HepG2 (cell line): ENCODE measurements at regions of chr9 and their contacts with region 1.

Region 1: DNA sequence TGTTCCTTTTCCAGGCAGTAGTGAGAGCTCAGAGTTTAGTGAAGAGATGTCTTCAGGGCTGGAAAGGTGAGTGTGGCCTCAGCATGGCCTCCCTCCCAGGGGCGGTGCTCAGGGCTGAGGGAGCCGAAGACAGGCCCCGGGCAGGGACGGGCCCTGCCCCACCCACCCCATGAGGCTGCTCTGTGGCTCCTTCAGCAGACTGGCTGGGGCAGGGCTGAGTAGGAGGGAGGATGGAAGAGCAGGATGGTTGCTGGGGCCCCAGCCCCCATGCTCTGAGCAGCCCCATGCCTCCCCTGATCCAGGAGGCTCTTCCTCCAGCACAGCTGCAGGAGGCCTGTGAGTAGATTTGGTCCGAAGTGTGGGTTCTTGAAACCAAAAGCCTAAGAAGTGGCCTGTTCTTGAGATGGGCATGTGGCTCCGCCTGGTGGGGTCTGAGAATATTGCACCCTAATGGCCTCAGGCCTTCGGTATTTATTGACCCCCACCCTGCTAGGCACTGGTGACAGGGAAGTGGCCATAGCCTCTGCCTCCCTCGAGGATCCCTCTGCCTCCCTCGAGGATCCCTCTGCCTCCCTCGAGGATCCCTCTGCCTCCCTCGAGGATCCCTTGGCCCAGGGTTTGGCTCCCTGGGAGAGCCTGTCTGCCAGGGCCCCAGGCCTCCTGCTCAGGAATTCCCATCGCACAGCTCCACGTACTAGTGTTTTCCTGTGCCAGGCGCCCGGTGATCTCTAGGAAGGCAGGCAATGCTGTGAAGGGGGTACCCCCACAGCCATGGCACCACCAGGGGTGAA is 65.4 kb upstream of the GARNL3 start:
- DNase-seq: peak; percentile 45
- ATAC-seq: peak; percentile 34
- H3K4me3 ChIP-seq: peak overlapping the region in 1 of 3 experiments; percentile 44; a peak in 1 of 6 replicates
- H3K27ac ChIP-seq: no peak overlapping the region
- H3K4me1 ChIP-seq: peaks cover 47% of the 10 kb centered on the region
- H3K27me3 ChIP-seq: no peaks in the 10 kb centered on the region
- CTCF ChIP-seq: peak; percentile 94
- EP300 ChIP-seq: no peak
- POLR2A ChIP-seq: no peak
- RAD21 ChIP-seq: peak; percentile 90

Region 2: GRCh38 chr9:126939821-126940221 is 259.4 kb before region 1 on chr9:
- CTCF ChIA-PET with region 1: interaction called, 45 read pairs
- POLR2A ChIA-PET with region 1: interaction called, 3 read pairs
- in situ Hi-C with region 1: no loop called
- intact Hi-C with region 1: loop called (anchors 1 kb)
- DNase-seq: peak; percentile 84
- ATAC-seq: peak; percentile 93
- H3K4me3 ChIP-seq: peak overlapping the region in 2 of 3 experiments; percentile 45 to 51; a peak in 4 of 6 replicates
- H3K27ac ChIP-seq: peak overlapping the region; percentile 42
- H3K4me1 ChIP-seq: peaks cover 36% of the 10 kb centered on the region
- H3K27me3 ChIP-seq: no peaks in the 10 kb centered on the region
- CTCF ChIP-seq: no peak
- EP300 ChIP-seq: no peak
- POLR2A ChIP-seq: no peak
- RAD21 ChIP-seq: no peak

Region 3: GRCh38 chr9:126965541-126966428 is 233.4 kb before region 1 on chr9:
- CTCF ChIA-PET with region 1: interaction called, 34 read pairs
- POLR2A ChIA-PET with region 1: no interaction called
- in situ Hi-C with region 1: loop called (anchors 10 kb)
- intact Hi-C with region 1: loop called (anchors 1 kb)
- DNase-seq: peak; percentile 30
- ATAC-seq: peak; percentile 94
- H3K4me3 ChIP-seq: no peak overlapping the region
- H3K27ac ChIP-seq: no peak overlapping the region
- H3K4me1 ChIP-seq: no peaks in the 10 kb centered on the region
- H3K27me3 ChIP-seq: no peaks in the 10 kb centered on the region
- CTCF ChIP-seq: peak; percentile 85
- EP300 ChIP-seq: no peak
- POLR2A ChIP-seq: no peak
- RAD21 ChIP-seq: peak; percentile 73

Region 4: GRCh38 chr9:127159325-127159801 is 39.8 kb before region 1 on chr9:
- CTCF ChIA-PET with region 1: no interaction called
- POLR2A ChIA-PET with region 1: no interaction called
- in situ Hi-C with region 1: no loop called
- intact Hi-C with region 1: loop called (anchors 1 kb)
- DNase-seq: peak; percentile 76
- ATAC-seq: peak; percentile 95
- H3K4me3 ChIP-seq: no peak overlapping the region
- H3K27ac ChIP-seq: no peak overlapping the region
- H3K4me1 ChIP-seq: peaks cover 34% of the 10 kb centered on the region
- H3K27me3 ChIP-seq: no peaks in the 10 kb centered on the region
- CTCF ChIP-seq: peak; percentile 79
- EP300 ChIP-seq: peak in 1 of 2 experiments; percentile 69; a peak in 2 of 4 replicates
- POLR2A ChIP-seq: no peak
- RAD21 ChIP-seq: no peak

Region 5: GRCh38 chr9:127224178-127224882 is 25.1 kb after region 1 on chr9:
- CTCF ChIA-PET with region 1: no interaction called
- POLR2A ChIA-PET with region 1: interaction called, 4 read pairs
- in situ Hi-C with region 1: no loop called
- intact Hi-C with region 1: loop called (anchors 1 kb)
- DNase-seq: peak; percentile 85
- ATAC-seq: peak; percentile 87
- H3K4me3 ChIP-seq: peak overlapping the region; percentile 62 to 92 (median 70)
- H3K27ac ChIP-seq: peak overlapping the region; percentile 79
- H3K4me1 ChIP-seq: peaks cover 27% of the 10 kb centered on the region
- H3K27me3 ChIP-seq: peaks cover 0 to 4% of the 10 kb centered on the region in 2 experiments; a peak in 2 of 5 replicates
- CTCF ChIP-seq: peak; percentile 41; the same call in 1 of the 2 replicates
- EP300 ChIP-seq: no peak
- POLR2A ChIP-seq: peak; percentile 35 to 69; a peak in 3 of 4 replicates
- RAD21 ChIP-seq: no peak